Transverse colon (tissue), 4 donors: ENCODE measurements at regions of chr2 and their contacts with region 1.

Region 1: GRCh38 chr2:123961576-123961975 is 63.5 kb upstream of the CNTNAP5 start:
- DNase-seq: no peak
- H3K4me3 ChIP-seq: no peak overlapping the region
- H3K27ac ChIP-seq: no peak overlapping the region
- H3K4me1 ChIP-seq: no peaks in the 10 kb centered on the region
- H3K27me3 ChIP-seq: no peaks in the 10 kb centered on the region
- CTCF ChIP-seq: no peak
- EP300 ChIP-seq: no peak
- POLR2A ChIP-seq: no peak

Region 2: GRCh38 chr2:125405816-125406215 is 1444.2 kb after region 1 on chr2:
- in situ Hi-C with region 1: no loop called
- intact Hi-C with region 1: loop called (anchors 10 kb)
- DNase-seq: no peak
- H3K4me3 ChIP-seq: no peak overlapping the region
- H3K27ac ChIP-seq: no peak overlapping the region
- H3K4me1 ChIP-seq: no peaks in the 10 kb centered on the region
- H3K27me3 ChIP-seq: no peaks in the 10 kb centered on the region
- CTCF ChIP-seq: no peak
- EP300 ChIP-seq: no peak
- POLR2A ChIP-seq: no peak